GM18951 (cell line): ENCODE measurements at regions of chr2 and their contacts with region 1.

Region 1: GRCh38 chr2:157480182-157480961 is 36.5 kb upstream of the CYTIP start:
- POLR2A ChIP-seq: no peak

Region 2: DNA sequence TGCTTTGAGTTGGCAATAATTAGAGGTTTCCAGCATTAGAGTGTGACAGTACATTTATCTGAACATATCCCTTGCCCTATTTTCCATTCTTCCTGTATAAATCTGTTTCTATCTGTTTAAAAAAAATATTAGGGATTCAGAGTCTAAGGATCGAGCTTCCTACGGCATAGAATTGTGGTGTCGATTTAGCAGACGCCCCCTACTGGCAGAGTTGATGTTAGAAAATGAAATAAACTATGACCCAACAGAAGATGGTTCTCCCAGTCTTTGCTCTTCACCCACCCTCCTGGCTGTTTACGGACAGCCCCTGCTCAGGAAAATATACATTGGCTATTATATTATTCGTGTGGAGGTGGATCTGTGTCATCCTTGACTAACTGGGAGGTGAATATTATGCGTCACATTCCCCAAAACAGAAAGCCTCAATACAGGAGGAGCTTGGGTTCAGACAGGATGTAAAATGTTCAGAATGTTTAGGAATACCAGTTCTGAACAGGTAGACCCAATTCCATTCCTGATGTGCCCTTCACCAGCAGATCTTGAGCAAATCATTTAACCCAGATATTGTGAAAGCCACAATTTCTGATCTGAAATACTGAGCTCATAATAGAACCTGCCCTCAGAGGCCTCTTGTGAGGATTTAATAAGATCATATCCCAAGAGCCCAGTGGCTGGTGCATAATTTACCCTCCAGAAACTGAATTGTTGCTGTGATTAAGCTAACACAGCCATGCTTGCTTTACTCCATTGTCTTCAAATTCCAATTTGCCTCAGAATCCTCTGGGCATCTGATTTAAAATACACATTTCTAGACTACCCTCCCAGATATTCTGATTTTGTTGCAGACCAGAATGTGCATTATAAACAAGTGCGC is 144.0 kb before region 1 on chr2:
- in situ Hi-C with region 1: loop called (anchors 10 kb)
- POLR2A ChIP-seq: no peak

Region 3: GRCh38 chr2:157363612-157364101 is 116.7 kb before region 1 on chr2:
- in situ Hi-C with region 1: no loop called
- POLR2A ChIP-seq: no peak

Region 4: GRCh38 chr2:157375384-157375783 is 105.0 kb before region 1 on chr2:
- in situ Hi-C with region 1: no loop called
- POLR2A ChIP-seq: no peak

Region 5: DNA sequence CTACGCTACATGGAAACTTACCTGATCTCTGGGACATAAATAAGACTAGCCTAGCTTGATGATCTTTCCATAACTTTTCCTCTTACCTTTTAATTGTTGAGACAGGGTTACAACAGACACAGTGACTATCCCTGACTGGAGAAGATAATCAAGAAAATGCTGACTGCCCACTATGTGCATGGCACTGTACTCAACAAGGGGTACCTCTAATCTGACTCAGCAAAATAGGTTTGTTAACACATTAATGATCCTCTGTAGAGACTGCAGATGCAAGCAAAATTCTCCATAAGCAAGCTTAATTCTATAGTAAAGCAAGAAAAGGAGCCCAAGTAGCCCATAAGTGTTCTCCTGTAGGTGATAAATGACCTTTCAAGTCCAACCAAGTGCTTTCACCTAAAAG is 122.8 kb after region 1 on chr2:
- in situ Hi-C with region 1: loop called (anchors 10 kb)
- POLR2A ChIP-seq: no peak

Region 6: GRCh38 chr2:157876066-157876787 is 395.9 kb after region 1 on chr2 and contains the start of gene ACVR1:
- in situ Hi-C with region 1: no loop called
- POLR2A ChIP-seq: no peak